ENCODE measurements at regions of chr10 and their contacts with region 1.

Region 1: GRCh38 chr10:46255801-46256747 is 30.7 kb upstream of the ANTXRL start:
- DNase-seq: peak; percentile 63 to 88 (median 79)
- ATAC-seq: peak; percentile 69 to 95 (median 90)
- H3K4me3 ChIP-seq: peak overlapping the region in 1 of 12 donors; percentile 23
- H3K27ac ChIP-seq: peak overlapping the region in 3 of 12 donors; percentile 29 to 50 (median 49)
- H3K4me1 ChIP-seq: peaks cover 0 to 17% (median 6%) of the 10 kb centered on the region in 12 donors
- H3K27me3 ChIP-seq: no peaks in the 10 kb centered on the region
- CTCF ChIP-seq: peak; percentile 27 to 60 (median 42)
- POLR2A ChIP-seq: no peak

Region 2: GRCh38 chr10:46198516-46198915 is 57.6 kb before region 1 on chr10:
- intact Hi-C with region 1: no loop called
- DNase-seq: no peak
- ATAC-seq: no peak
- H3K4me3 ChIP-seq: no peak overlapping the region
- H3K27ac ChIP-seq: no peak overlapping the region
- H3K4me1 ChIP-seq: no peaks in the 10 kb centered on the region
- H3K27me3 ChIP-seq: no peaks in the 10 kb centered on the region
- CTCF ChIP-seq: no peak
- POLR2A ChIP-seq: no peak

Region 3: GRCh38 chr10:46228563-46229071 is 27.5 kb before region 1 on chr10:
- intact Hi-C with region 1: loop called in 1 of 10 experiments (anchors 2 kb)
- DNase-seq: peak; percentile 61 to 71 (median 66)
- ATAC-seq: peak; percentile 76 to 98 (median 93)
- H3K4me3 ChIP-seq: no peak overlapping the region
- H3K27ac ChIP-seq: no peak overlapping the region
- H3K4me1 ChIP-seq: peaks cover 0 to 5% (median 0%) of the 10 kb centered on the region in 12 donors
- H3K27me3 ChIP-seq: peaks cover 0 to 3% (median 0%) of the 10 kb centered on the region in 9 donors
- CTCF ChIP-seq: peak; percentile 83 to 93 (median 89)
- POLR2A ChIP-seq: no peak

Region 4: GRCh38 chr10:46299536-46300369 is 43.7 kb after region 1 on chr10:
- intact Hi-C with region 1: loop called in 1 of 10 experiments (anchors 10 kb)
- DNase-seq: peak in 1 of 5 donors; percentile 25
- ATAC-seq: peak; percentile 37 to 73 (median 66)
- H3K4me3 ChIP-seq: no peak overlapping the region
- H3K27ac ChIP-seq: no peak overlapping the region
- H3K4me1 ChIP-seq: no peaks in the 10 kb centered on the region
- H3K27me3 ChIP-seq: no peaks in the 10 kb centered on the region
- CTCF ChIP-seq: no peak
- POLR2A ChIP-seq: no peak

Region 5: DNA sequence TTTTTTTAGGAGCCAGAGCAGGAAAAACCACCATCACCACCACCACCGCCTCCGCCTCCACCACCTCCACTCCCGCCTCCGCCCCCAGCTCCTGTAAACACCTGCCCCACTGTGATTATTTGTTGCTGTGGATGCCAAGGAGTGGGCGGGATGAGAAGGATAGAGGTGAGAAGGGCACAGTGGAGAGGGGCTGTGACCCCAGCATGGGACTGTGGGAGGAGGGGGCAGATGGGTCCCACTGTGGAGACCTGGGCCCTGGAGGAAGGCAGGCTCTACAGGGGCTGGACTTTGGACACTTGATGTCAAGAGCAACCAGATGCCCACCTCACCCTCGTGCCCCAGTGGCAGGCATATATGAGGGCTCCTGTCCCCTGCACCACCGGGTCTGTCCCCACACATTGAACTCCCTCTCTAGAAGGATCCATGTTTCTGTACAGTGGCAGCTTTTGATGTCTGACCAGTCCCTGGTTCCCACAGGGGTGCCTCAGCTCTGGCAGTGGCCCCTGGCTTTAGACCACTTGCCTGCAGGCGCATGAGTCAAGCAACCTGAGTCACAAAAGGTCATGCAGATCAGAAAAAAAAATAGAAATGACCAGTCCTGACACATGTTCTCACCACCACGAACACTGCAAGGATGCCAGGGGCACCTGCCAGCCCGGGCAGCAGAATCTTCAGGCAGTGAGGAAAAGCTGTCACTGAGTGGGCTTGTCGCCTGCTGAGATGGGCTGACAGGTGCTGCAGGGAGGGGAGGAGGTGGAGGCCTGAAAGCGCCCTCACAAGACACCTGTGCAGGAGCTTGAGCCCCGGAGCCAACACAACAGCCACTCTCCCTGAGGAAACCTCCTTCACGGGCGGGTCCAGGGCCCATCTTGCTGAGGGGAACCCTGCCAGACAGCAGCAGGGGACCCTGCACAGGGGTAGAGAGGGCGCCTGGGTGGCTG is 55.7 kb after region 1 on chr10:
- intact Hi-C with region 1: loop called in 2 of 10 experiments (anchors 2 to 10 kb)
- DNase-seq: peak in 1 of 5 donors; percentile 10
- ATAC-seq: no peak
- H3K4me3 ChIP-seq: no peak overlapping the region
- H3K27ac ChIP-seq: no peak overlapping the region
- H3K4me1 ChIP-seq: peaks cover 0 to 4% (median 0%) of the 10 kb centered on the region in 12 donors
- H3K27me3 ChIP-seq: no peaks in the 10 kb centered on the region
- CTCF ChIP-seq: no peak
- POLR2A ChIP-seq: no peak

Measured in heart left ventricle (tissue), 16 donors.